ENCODE measurements at regions of chr4 and their contacts with region 1.

Region 1: GRCh38 chr4:150867148-150867547 is 147.9 kb downstream of the LRBA start:
- DNase-seq: peak; percentile 17
- ATAC-seq: peak; percentile 66
- H3K4me3 Mint-ChIP-seq: no peak overlapping the region
- H3K27ac Mint-ChIP-seq: no peak overlapping the region
- H3K4me1 Mint-ChIP-seq: no peaks in the 10 kb centered on the region
- H3K27me3 Mint-ChIP-seq: no peaks in the 10 kb centered on the region

Region 2: DNA sequence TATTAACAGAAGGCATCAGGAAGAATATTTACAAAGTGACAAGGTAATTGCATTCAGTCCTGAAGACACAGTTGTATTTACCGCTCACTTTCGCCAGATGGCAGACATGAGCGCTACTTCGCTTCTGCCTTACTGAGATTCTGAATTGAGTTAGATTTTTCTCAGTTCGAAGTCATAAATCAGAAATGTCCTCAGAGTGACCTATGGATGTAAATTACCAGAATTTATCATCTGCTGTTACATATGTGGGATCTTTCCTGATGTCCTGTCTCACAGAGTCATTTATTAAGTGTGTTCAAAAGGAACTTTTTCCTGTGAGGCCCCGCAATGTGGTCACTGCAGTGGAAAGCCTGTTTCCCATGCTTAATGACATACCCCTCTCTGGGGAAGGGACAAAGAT is 886.2 kb before region 1 on chr4:
- CTCF ChIA-PET with region 1: no interaction called
- POLR2A ChIA-PET with region 1: no interaction called
- intact Hi-C with region 1: loop called (anchors 1 kb)
- DNase-seq: peak; percentile 72
- ATAC-seq: no peak
- H3K4me3 Mint-ChIP-seq: no peak overlapping the region
- H3K27ac Mint-ChIP-seq: no peak overlapping the region
- H3K4me1 Mint-ChIP-seq: peaks cover under 1% of the 10 kb centered on the region
- H3K27me3 Mint-ChIP-seq: peaks cover 2% of the 10 kb centered on the region

Region 3: GRCh38 chr4:149999485-150000074 is 867.6 kb before region 1 on chr4:
- CTCF ChIA-PET with region 1: interaction called, 5 read pairs
- POLR2A ChIA-PET with region 1: no interaction called
- intact Hi-C with region 1: loop called in 1 of 2 experiments (anchors 5 kb)
- DNase-seq: peak; percentile 15
- ATAC-seq: no peak
- H3K4me3 Mint-ChIP-seq: no peak overlapping the region
- H3K27ac Mint-ChIP-seq: no peak overlapping the region
- H3K4me1 Mint-ChIP-seq: peaks cover 6% of the 10 kb centered on the region
- H3K27me3 Mint-ChIP-seq: peaks cover 10% of the 10 kb centered on the region

Region 4: GRCh38 chr4:150297861-150298474 is 569.2 kb before region 1 on chr4:
- CTCF ChIA-PET with region 1: interaction called, 16 read pairs
- POLR2A ChIA-PET with region 1: no interaction called
- intact Hi-C with region 1: loop called (anchors 1 kb)
- DNase-seq: peak; percentile 60
- ATAC-seq: no peak
- H3K4me3 Mint-ChIP-seq: no peak overlapping the region
- H3K27ac Mint-ChIP-seq: no peak overlapping the region
- H3K4me1 Mint-ChIP-seq: peaks cover 15% of the 10 kb centered on the region
- H3K27me3 Mint-ChIP-seq: no peaks in the 10 kb centered on the region

Region 5: GRCh38 chr4:150816491-150816890 is 50.7 kb before region 1 on chr4:
- CTCF ChIA-PET with region 1: interaction called, 5 read pairs
- POLR2A ChIA-PET with region 1: no interaction called
- intact Hi-C with region 1: loop called in 1 of 2 experiments (anchors 2 kb)
- DNase-seq: no peak
- ATAC-seq: no peak
- H3K4me3 Mint-ChIP-seq: no peak overlapping the region
- H3K27ac Mint-ChIP-seq: no peak overlapping the region
- H3K4me1 Mint-ChIP-seq: peaks cover 12% of the 10 kb centered on the region
- H3K27me3 Mint-ChIP-seq: no peaks in the 10 kb centered on the region

Region 6: GRCh38 chr4:150855981-150856510 is 11.1 kb before region 1 on chr4:
- CTCF ChIA-PET with region 1: interaction called, 22 read pairs
- POLR2A ChIA-PET with region 1: no interaction called
- intact Hi-C with region 1: no loop called
- DNase-seq: no peak
- ATAC-seq: no peak
- H3K4me3 Mint-ChIP-seq: no peak overlapping the region
- H3K27ac Mint-ChIP-seq: no peak overlapping the region
- H3K4me1 Mint-ChIP-seq: no peaks in the 10 kb centered on the region
- H3K27me3 Mint-ChIP-seq: no peaks in the 10 kb centered on the region

Region 7: DNA sequence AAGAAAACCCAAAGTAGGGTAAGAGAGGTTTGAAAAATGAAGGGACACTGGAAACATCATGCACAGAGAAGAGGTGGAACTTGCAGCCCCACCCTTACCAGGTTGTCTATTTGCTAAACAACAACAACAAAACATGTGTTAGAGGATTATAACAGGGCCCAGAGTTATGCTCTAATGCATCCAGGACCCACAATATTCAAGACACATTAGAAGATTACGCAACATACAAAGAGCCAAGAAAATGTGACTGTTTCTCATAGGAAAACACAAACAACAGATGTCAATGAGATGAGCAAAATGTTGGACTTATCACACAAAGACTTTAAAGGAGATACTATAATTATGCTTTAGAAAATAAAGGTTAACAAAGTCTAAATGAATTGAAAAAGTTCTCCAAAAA is 19.5 kb after region 1 on chr4:
- CTCF ChIA-PET with region 1: interaction called, 23 read pairs
- POLR2A ChIA-PET with region 1: no interaction called
- intact Hi-C with region 1: no loop called
- DNase-seq: no peak
- ATAC-seq: no peak
- H3K4me3 Mint-ChIP-seq: no peak overlapping the region
- H3K27ac Mint-ChIP-seq: no peak overlapping the region
- H3K4me1 Mint-ChIP-seq: peaks cover 31% of the 10 kb centered on the region
- H3K27me3 Mint-ChIP-seq: no peaks in the 10 kb centered on the region

Measured in activated CD4-positive, alpha-beta T cell treated with anti-CD3 and anti-CD28 coated beads for 36 hours (primary cell).